ENCODE measurements at regions of chr10 and their contacts with region 1.

Region 1: DNA sequence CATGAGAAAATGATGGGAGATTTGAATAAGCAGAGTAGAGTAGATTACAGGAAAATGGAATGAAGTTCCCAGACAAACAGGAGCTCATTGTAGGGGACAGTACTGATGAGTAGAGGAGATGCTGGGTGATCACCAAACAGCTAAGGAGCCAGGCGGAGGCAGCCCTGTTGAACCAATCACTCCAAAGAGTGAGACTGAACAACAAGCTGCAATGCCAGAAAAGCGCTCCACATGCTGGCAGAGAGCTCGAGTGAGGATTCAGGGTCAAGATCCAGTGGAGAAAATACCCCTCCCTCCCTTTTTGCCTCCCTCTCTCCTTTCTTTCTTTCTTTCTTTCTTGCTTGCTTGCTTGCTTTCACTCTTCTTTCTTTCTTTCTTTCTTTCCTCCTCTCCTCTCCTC is 133.3 kb downstream of the PFKFB3 start:
- DNase-seq: no peak
- H3K4me3 ChIP-seq: no peak overlapping the region
- H3K4me3 Mint-ChIP-seq: no peak overlapping the region
- H3K27ac Mint-ChIP-seq: no peak overlapping the region
- H3K4me1 ChIP-seq: no peaks in the 10 kb centered on the region
- H3K4me1 Mint-ChIP-seq: peaks cover 7% of the 10 kb centered on the region
- H3K27me3 ChIP-seq: no peaks in the 10 kb centered on the region
- H3K27me3 Mint-ChIP-seq: no peaks in the 10 kb centered on the region
- CTCF ChIP-seq: no peak

Region 2: DNA sequence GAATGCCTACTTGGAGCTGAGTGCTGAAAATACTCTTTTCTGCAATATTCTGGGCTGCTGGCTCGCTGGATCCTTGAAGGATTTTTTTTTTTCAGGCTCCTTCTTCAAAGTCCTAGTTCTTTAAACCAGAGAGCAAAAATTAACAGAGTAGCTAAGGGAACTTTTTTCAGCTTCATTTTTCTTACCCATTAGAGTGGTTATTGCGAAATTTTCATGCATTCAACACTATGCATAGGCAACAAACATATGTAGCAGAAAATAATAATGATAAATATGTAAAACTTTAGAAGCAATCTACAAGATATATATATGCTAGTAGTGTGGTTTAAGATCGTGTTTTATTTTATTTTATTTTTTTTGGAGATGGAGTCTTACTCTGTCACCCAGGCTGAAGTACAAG is 810.2 kb after region 1 on chr10:
- CTCF ChIA-PET with region 1: interaction called, 10 read pairs
- POLR2A ChIA-PET with region 1: no interaction called
- intact Hi-C with region 1: no loop called
- DNase-seq: no peak
- H3K4me3 ChIP-seq: no peak overlapping the region
- H3K4me3 Mint-ChIP-seq: no peak overlapping the region
- H3K27ac Mint-ChIP-seq: no peak overlapping the region
- H3K4me1 ChIP-seq: no peaks in the 10 kb centered on the region
- H3K4me1 Mint-ChIP-seq: no peaks in the 10 kb centered on the region
- H3K27me3 ChIP-seq: no peaks in the 10 kb centered on the region
- H3K27me3 Mint-ChIP-seq: no peaks in the 10 kb centered on the region
- CTCF ChIP-seq: no peak